Panc1 (cell line): ENCODE measurements at regions of chr22 and their contacts with region 1.

Region 1: DNA sequence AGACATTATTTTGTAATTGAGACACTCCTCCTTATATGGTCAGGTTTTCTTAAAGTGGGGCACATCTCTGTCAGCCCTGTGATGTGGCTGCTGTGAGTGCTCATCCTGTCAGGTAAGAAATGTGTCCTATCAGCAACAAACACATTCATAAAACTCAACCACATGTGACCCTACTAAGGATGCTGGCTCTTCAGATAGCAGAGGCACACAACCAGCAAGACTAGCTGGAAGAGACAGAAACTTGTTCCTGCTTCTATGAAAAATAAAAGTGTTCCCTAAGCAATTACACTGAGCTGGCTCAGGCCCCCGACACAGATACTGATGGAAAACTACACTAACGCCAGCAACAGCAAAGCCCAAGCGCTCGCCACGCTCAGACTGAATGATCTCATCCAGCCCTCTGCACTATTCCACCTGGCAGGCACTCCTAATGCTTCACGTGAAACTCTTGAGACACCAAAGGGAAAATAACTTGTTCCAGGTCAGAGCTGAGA is 49.8 kb upstream of the CYP2D6 start:
- DNase-seq: no peak
- ATAC-seq: no peak
- H3K4me3 ChIP-seq: no peak overlapping the region
- H3K27ac ChIP-seq: no peak overlapping the region
- H3K4me1 ChIP-seq: no peaks in the 10 kb centered on the region
- H3K27me3 ChIP-seq: no peaks in the 10 kb centered on the region
- CTCF ChIP-seq: no peak

Region 2: DNA sequence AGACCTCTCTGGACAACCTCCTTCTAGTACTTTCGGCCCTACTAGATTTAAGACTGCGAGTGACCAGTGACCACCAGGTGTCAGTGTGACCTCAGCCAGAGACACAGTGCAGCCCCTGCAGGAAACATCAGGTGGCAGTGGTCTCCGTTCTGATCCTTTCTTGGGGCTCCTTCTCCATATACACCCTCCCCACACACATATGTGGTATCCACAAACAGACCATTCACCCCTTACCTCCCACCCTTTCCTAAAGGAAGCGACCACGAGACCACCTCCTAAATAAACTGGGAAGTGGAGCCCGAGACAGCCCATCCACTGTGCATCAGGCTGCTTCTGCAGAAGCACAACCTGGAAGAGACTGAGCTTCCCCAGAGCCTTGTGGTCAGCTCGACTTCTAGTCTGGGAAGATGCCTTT is 11.3 kb before region 1 on chr22:
- CTCF ChIA-PET with region 1: interaction called, 15 read pairs
- POLR2A ChIA-PET with region 1: no interaction called
- in situ Hi-C with region 1: no loop called
- intact Hi-C with region 1: no loop called
- DNase-seq: peak; percentile 64
- ATAC-seq: peak; percentile 88
- H3K4me3 ChIP-seq: no peak overlapping the region
- H3K27ac ChIP-seq: no peak overlapping the region
- H3K4me1 ChIP-seq: no peaks in the 10 kb centered on the region; the same call in 1 of the 2 replicates
- H3K27me3 ChIP-seq: no peaks in the 10 kb centered on the region
- CTCF ChIP-seq: peak; percentile 90

Region 3: GRCh38 chr22:42207918-42208317 is 27.5 kb after region 1 on chr22:
- CTCF ChIA-PET with region 1: no interaction called
- POLR2A ChIA-PET with region 1: interaction called, 10 read pairs
- in situ Hi-C with region 1: no loop called
- intact Hi-C with region 1: no loop called
- DNase-seq: no peak
- ATAC-seq: no peak
- H3K4me3 ChIP-seq: no peak overlapping the region
- H3K27ac ChIP-seq: no peak overlapping the region
- H3K4me1 ChIP-seq: no peaks in the 10 kb centered on the region
- H3K27me3 ChIP-seq: no peaks in the 10 kb centered on the region
- CTCF ChIP-seq: no peak

Region 4: DNA sequence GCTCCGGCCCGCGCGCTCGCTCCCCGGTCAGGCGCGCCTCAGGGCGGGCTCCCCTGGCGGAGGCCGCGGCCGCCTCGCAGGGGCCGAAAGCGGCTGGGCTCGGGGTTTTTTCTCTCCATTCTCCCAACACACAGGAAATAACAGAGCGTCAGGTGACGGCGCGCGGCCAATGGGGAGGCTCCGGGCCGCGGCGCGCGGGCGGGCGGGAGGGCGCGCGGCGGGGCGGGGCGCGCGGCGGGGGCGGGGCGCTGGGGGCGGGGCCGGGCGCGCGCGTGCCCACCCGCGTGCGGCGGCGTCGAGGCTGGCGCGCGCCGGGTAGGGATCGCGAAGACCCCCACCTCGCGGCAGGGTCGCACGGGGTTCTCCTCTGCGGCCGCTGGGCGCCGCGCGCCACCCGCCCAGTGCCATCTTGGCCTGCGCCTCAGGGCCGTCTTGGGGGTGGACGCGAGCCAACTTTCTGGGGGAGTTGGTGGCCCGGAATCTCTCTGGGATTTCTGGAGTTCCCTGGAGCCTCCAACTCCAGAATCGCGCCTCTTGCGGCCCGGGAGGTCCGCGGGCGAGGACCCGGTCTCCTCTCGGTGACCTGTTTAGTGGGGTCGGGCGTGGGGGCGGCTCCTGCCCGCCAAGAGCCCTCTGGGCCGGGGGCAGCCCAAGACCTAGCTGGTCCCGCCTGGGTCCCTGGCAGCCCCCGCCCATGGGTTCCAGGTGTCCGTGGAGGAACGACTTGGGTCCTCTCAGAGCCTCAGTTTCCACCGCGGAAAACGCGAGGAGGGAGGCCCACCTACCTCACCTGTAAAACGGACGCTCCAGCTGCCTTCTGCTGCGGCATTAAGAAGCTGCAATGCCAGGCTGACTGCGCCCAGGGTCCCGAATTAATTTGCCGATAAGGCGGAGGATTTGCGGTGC is 90.4 kb after region 1 on chr22 and contains the start of gene TCF20:
- CTCF ChIA-PET with region 1: no interaction called
- POLR2A ChIA-PET with region 1: no interaction called
- in situ Hi-C with region 1: no loop called
- intact Hi-C with region 1: loop called (anchors 10 kb)
- DNase-seq: no peak
- ATAC-seq: peak; percentile 80
- H3K4me3 ChIP-seq: peak within 1 kb of the TSS; percentile 70 to 72
- H3K27ac ChIP-seq: peak within 1 kb of the TSS; percentile 80
- H3K4me1 ChIP-seq: peaks cover 32% of the 10 kb centered on the region
- H3K27me3 ChIP-seq: no peaks in the 10 kb centered on the region
- CTCF ChIP-seq: no peak
- total RNA-seq, gene TCF20: 79.8 TPM

Region 5: DNA sequence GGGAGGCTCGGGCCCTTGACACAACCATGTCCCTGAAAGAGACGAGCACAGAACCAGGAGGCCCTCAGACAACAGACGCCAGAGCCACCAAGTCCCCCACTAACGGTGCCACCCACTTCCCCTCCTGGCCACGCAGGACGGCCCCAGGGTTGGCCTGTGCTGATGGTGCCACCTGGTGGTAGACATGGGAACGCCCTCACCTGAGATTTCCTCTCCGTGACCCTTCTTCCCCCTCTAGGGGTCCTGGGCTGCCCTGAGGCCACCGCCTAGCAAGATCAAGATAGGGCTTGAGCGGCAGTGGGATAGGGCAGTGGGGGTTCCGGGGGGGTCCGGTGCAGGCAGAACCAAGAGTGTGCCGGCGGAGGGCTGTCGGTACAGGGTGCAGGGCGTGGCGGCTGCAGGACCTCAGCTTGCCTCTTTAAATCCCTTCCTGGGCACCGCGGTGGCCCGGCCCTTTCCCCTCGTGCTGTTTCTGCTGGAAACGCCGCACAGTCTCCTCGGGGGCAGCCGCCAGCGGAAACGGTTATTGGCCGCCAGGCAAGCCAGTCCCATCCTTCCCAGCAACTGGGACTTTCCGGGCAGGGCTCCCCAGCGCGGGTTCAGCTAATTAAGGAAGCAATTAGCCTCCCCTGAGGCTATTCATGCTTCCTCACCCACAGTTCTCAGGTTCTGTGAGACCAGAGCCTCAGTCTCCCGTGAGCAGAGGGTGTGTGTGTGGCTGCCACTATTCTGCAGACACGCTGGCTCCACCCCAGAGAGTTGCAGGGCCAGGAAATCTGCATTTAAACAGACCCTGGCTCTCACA is 257.3 kb after region 1 on chr22:
- CTCF ChIA-PET with region 1: no interaction called
- POLR2A ChIA-PET with region 1: no interaction called
- in situ Hi-C with region 1: no loop called
- intact Hi-C with region 1: loop called (anchors 5 kb)
- DNase-seq: peak; percentile 39
- ATAC-seq: peak; percentile 86
- H3K4me3 ChIP-seq: peak overlapping the region; percentile 46 to 53
- H3K27ac ChIP-seq: 0 out of 2 replicates have a peak overlapping the region, but pooled peaks have one; percentile 34
- H3K4me1 ChIP-seq: peaks cover 13% of the 10 kb centered on the region
- H3K27me3 ChIP-seq: no peaks in the 10 kb centered on the region
- CTCF ChIP-seq: peak; percentile 91